Aorta (tissue), 5 donors: ENCODE measurements at regions of chr2 and their contacts with region 1.

Region 1: GRCh38 chr2:164841719-164842623 is at the start of gene COBLL1:
- DNase-seq: peak; percentile 86 to 91
- ATAC-seq: peak; percentile 87
- H3K4me3 ChIP-seq: peak within 1 kb of the TSS; percentile 76 to 94
- H3K27ac ChIP-seq: peak within 1 kb of the TSS; percentile 92 to 97
- H3K4me1 ChIP-seq: peaks cover 0 to 2% of the 10 kb centered on the region in 2 donors
- H3K27me3 ChIP-seq: no peaks in the 10 kb centered on the region
- total RNA-seq, gene COBLL1: 63.5 to 101 TPM

Region 2: DNA sequence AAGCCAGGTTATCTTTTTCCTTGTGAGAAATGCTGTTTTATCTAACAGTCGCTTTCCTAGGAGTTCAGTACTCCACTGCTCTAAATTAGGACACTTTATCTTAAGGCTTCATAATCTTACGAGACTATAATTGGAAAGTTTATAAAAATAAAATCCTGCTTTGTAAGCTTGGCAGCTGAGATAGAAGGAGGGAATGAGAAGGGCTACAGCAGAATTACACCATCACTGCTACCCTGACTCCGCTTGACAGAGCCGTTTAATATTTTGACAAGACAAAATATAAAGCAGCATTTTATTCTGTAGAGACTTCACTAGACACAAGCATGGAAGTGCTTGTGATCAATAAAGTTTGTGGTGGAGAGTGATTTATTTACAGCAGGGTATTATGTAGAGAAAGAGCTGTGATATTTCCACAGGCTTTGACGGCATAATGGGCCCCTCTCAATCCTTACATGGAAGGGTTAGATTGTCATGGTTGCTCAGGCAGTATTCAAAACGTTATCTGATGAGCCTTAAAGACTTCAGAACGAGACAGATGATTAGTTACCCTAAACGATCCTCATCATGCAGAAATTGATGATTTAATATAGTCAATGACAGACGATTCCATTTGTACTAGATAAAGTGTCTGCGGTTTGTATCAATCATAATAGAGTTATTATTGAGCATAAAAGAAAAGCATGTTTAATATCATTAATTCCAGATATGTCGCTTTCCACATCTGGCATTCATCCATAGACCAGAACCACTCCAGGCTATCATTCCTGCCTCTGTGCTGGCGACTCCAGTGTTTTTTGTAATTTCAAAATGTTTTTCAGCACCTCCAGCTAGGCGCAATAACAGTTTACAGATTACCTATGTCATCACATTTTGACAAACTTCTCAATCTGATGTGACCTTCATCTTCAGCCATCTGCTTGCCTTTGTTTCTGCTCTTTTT is 1348.3 kb before region 1 on chr2:
- intact Hi-C with region 1: no loop called
- DNase-seq: no peak
- ATAC-seq: no peak
- H3K4me3 ChIP-seq: peak overlapping the region in 1 of 2 donors; percentile 31
- H3K27ac ChIP-seq: no peak overlapping the region
- H3K4me1 ChIP-seq: peaks cover 0 to 2% of the 10 kb centered on the region in 2 donors
- H3K27me3 ChIP-seq: no peaks in the 10 kb centered on the region

Region 3: GRCh38 chr2:164692114-164692513 is 149.9 kb before region 1 on chr2:
- intact Hi-C with region 1: no loop called
- DNase-seq: no peak
- ATAC-seq: no peak
- H3K4me3 ChIP-seq: no peak overlapping the region
- H3K27ac ChIP-seq: no peak overlapping the region
- H3K4me1 ChIP-seq: peaks cover 0 to 4% of the 10 kb centered on the region in 2 donors
- H3K27me3 ChIP-seq: no peaks in the 10 kb centered on the region

Region 4: GRCh38 chr2:164768662-164769061 is 73.3 kb before region 1 on chr2:
- intact Hi-C with region 1: no loop called
- DNase-seq: no peak
- ATAC-seq: no peak
- H3K4me3 ChIP-seq: no peak overlapping the region
- H3K27ac ChIP-seq: no peak overlapping the region
- H3K4me1 ChIP-seq: peaks cover 2 to 3% of the 10 kb centered on the region in 2 donors
- H3K27me3 ChIP-seq: no peaks in the 10 kb centered on the region

Region 5: DNA sequence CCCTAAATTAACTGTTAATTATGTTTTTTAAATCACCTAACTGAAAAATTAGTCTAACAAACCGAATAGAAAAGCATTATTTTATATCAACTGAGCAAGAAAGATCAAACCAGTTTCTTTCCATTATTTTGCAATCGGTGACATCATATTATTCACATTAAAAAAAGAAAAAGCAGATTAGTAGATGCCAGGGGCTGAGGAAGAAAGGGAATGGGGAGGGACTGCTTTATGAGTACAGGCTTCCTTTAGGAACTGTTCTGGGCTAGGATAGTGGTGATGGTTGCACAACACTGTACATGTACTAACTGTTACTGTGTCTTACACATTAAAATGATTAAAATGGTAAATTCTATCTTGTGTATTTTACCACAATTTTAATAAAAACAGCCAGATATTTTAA is 59.6 kb before region 1 on chr2:
- intact Hi-C with region 1: loop called in 1 of 2 experiments (anchors 5 kb)
- DNase-seq: no peak
- ATAC-seq: peak; percentile 85
- H3K4me3 ChIP-seq: no peak overlapping the region
- H3K27ac ChIP-seq: peak overlapping the region in 1 of 2 donors; percentile 51
- H3K4me1 ChIP-seq: peaks cover 7 to 11% of the 10 kb centered on the region in 2 donors
- H3K27me3 ChIP-seq: no peaks in the 10 kb centered on the region

Region 6: GRCh38 chr2:164808776-164809175 is 33.2 kb before region 1 on chr2:
- intact Hi-C with region 1: no loop called
- DNase-seq: no peak
- ATAC-seq: no peak
- H3K4me3 ChIP-seq: no peak overlapping the region
- H3K27ac ChIP-seq: no peak overlapping the region
- H3K4me1 ChIP-seq: peaks cover under 1 to 2% of the 10 kb centered on the region in 2 donors
- H3K27me3 ChIP-seq: no peaks in the 10 kb centered on the region

Region 7: GRCh38 chr2:164826293-164827243 is 15.4 kb before region 1 on chr2:
- intact Hi-C with region 1: loop called in 1 of 2 experiments (anchors 2 kb)
- DNase-seq: peak in 1 of 2 donors; percentile 58
- ATAC-seq: peak; percentile 70
- H3K4me3 ChIP-seq: peak overlapping the region in 1 of 2 donors; percentile 48
- H3K27ac ChIP-seq: peak overlapping the region; percentile 67 to 82
- H3K4me1 ChIP-seq: peaks cover 0 to 2% of the 10 kb centered on the region in 2 donors
- H3K27me3 ChIP-seq: no peaks in the 10 kb centered on the region

Region 8: GRCh38 chr2:164917296-164917903 is 75.4 kb after region 1 on chr2:
- intact Hi-C with region 1: loop called (anchors 5 kb)
- DNase-seq: peak; percentile 42 to 47
- ATAC-seq: no peak
- H3K4me3 ChIP-seq: no peak overlapping the region
- H3K27ac ChIP-seq: no peak overlapping the region
- H3K4me1 ChIP-seq: no peaks in the 10 kb centered on the region
- H3K27me3 ChIP-seq: no peaks in the 10 kb centered on the region